T-cell (primary cell): ENCODE measurements at regions of chr13 and their contacts with region 1.

Region 1: DNA sequence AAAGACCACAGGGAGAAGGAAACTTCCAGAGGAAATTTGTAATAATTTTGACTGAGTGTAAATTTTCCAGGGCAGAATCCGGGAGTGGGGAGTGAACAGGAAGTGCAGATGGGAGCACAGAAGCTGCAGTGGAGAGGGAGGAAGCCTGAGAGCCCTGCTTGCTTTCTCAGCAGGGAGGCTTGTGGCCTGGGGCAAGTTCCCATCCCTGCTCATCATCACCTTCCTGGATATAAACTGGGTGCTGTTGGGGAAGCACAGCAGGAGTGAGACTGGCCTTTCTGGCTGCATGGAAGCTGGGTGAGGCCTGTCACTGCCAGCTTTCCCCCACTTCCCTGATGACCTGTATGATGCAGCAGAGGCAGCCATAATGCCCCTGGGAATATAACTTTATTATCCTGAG is 532.9 kb downstream of the SLITRK6 start:
- DNase-seq: no peak
- ATAC-seq: no peak
- H3K4me3 ChIP-seq: no peak overlapping the region
- H3K4me3 Mint-ChIP-seq: no peak overlapping the region
- H3K27ac ChIP-seq: no peak overlapping the region
- H3K27ac Mint-ChIP-seq: no peak overlapping the region
- H3K4me1 ChIP-seq: no peaks in the 10 kb centered on the region
- H3K4me1 Mint-ChIP-seq: no peaks in the 10 kb centered on the region
- H3K27me3 ChIP-seq: no peaks in the 10 kb centered on the region
- H3K27me3 Mint-ChIP-seq: no peaks in the 10 kb centered on the region

Region 2: GRCh38 chr13:85093808-85094207 is 172.5 kb before region 1 on chr13:
- CTCF ChIA-PET with region 1: no interaction called
- POLR2A ChIA-PET with region 1: no interaction called
- DNase-seq: no peak
- ATAC-seq: no peak
- H3K4me3 ChIP-seq: no peak overlapping the region
- H3K4me3 Mint-ChIP-seq: no peak overlapping the region
- H3K27ac ChIP-seq: no peak overlapping the region
- H3K27ac Mint-ChIP-seq: no peak overlapping the region
- H3K4me1 ChIP-seq: no peaks in the 10 kb centered on the region
- H3K4me1 Mint-ChIP-seq: no peaks in the 10 kb centered on the region
- H3K27me3 ChIP-seq: no peaks in the 10 kb centered on the region
- H3K27me3 Mint-ChIP-seq: no peaks in the 10 kb centered on the region

Region 3: DNA sequence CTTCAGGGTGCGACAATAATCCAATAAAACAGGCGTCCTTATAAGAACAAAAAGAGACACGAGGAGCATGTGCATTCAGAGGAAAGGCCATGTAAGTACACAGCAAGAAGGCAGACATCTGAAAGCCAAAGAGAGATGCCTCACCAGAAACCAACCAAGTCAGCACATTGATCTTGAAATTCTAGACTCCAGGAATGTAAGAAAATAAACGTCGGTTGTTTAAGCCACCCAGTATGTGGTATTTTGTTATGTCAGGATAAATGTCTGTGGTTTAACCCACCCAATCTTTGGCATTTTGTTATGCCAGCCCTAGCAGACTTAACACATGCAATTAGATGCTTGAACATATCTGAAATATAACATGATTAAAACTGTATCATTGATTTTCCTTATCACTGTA is 80.9 kb after region 1 on chr13:
- CTCF ChIA-PET with region 1: interaction called in 1 of 2 experiments, 10 read pairs
- POLR2A ChIA-PET with region 1: no interaction called
- DNase-seq: no peak
- ATAC-seq: no peak
- H3K4me3 ChIP-seq: no peak overlapping the region
- H3K4me3 Mint-ChIP-seq: no peak overlapping the region
- H3K27ac ChIP-seq: no peak overlapping the region
- H3K27ac Mint-ChIP-seq: no peak overlapping the region
- H3K4me1 ChIP-seq: no peaks in the 10 kb centered on the region
- H3K4me1 Mint-ChIP-seq: no peaks in the 10 kb centered on the region
- H3K27me3 ChIP-seq: no peaks in the 10 kb centered on the region
- H3K27me3 Mint-ChIP-seq: no peaks in the 10 kb centered on the region

Region 4: GRCh38 chr13:85445534-85445933 is 179.2 kb after region 1 on chr13:
- CTCF ChIA-PET with region 1: no interaction called
- POLR2A ChIA-PET with region 1: no interaction called
- DNase-seq: no peak
- ATAC-seq: no peak
- H3K4me3 ChIP-seq: no peak overlapping the region
- H3K4me3 Mint-ChIP-seq: no peak overlapping the region
- H3K27ac ChIP-seq: no peak overlapping the region
- H3K27ac Mint-ChIP-seq: no peak overlapping the region
- H3K4me1 ChIP-seq: no peaks in the 10 kb centered on the region
- H3K4me1 Mint-ChIP-seq: no peaks in the 10 kb centered on the region
- H3K27me3 ChIP-seq: no peaks in the 10 kb centered on the region
- H3K27me3 Mint-ChIP-seq: no peaks in the 10 kb centered on the region